ENCODE measurements at regions of chr20 and their contacts with region 1.

Region 1: DNA sequence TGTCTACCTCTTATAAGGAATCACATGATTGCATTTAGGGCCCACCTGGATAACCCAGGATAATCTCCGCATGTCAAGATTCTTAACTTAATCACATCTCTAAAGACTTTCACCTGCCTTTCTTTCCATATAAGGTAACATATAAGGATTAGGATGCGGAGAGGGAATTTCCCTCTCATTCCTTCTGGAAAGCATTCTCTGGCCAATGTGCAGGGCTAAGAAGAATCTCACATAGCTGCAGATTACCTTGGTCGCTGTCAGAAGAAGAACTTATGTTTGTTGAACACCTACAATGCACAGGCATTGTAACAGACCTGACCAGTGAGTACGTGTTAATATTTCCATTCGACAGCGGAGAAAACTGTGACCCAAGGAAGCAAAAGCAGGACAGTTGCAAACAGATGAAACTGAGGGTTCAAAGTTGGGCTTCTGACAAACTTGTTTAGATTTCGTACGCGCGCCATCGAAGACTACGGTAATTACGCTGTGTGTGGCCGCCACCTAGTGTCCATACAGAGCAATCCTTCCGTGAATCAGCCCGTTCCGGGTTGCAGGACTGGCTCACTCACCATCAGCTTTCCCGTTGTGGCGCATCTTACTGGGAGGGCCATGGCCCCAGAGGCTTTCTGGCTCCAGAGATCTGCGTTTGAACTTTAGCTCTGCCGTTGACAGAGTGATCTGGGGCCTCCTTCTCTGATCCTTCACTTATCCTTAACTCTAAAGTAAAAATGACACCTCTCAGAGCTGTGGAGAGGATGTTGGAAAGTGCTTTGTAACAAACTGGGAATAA is 9.5 kb downstream of the C20orf202 start:
- DNase-seq: peak; percentile 52 to 63 (median 60)
- H3K4me3 ChIP-seq: no peak overlapping the region
- H3K4me3 Mint-ChIP-seq: peak overlapping the region in 7 of 8 donors; percentile 4 to 52 (median 26)
- H3K27ac ChIP-seq: no peak overlapping the region
- H3K27ac Mint-ChIP-seq: peak overlapping the region in 1 of 7 donors; percentile 13
- H3K4me1 ChIP-seq: peaks cover 33% of the 10 kb centered on the region
- H3K4me1 Mint-ChIP-seq: peaks cover 19 to 28% (median 25%) of the 10 kb centered on the region in 4 donors
- H3K27me3 ChIP-seq: no peaks in the 10 kb centered on the region
- H3K27me3 Mint-ChIP-seq: peaks cover 3 to 6% of the 10 kb centered on the region in 2 donors

Region 2: DNA sequence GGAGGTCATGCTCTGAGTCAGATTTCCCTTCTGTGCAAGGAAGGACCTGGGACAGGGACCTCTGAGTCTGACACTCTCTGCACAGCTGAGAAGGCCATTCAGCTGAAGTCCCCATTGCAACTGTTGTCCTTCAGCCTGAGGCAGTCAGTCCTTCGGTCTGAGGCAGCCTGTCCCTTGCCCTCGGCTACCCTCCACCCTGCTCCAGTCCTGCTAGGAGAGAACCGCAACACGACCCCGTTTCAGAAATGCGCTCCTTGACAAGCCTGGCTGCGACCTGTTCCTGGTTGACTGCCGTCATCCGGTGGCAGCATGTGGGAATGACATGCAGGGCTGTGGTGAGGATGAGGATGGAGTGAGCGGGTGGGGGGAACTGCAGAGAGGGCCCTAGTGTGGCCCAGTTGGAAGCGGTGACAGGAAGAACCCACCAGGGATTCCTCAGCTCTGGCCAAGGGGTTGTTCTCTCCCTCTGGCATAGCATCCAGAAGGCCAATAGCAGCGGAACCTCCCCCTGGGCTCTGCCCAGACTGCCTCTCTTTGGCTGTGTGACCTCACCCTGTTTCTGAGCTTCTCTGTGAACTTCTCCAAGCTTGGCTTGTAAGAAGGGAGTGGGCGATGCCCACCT is 256.4 kb before region 1 on chr20:
- CTCF ChIA-PET with region 1: interaction called, 4 read pairs
- POLR2A ChIA-PET with region 1: no interaction called
- intact Hi-C with region 1: loop called (anchors 5 kb)
- DNase-seq: peak; percentile 62 to 74 (median 64)
- H3K4me3 ChIP-seq: no peak overlapping the region
- H3K4me3 Mint-ChIP-seq: no peak overlapping the region
- H3K27ac ChIP-seq: no peak overlapping the region
- H3K27ac Mint-ChIP-seq: no peak overlapping the region
- H3K4me1 ChIP-seq: no peaks in the 10 kb centered on the region
- H3K4me1 Mint-ChIP-seq: peaks cover 0 to 3% (median 1%) of the 10 kb centered on the region in 4 donors
- H3K27me3 ChIP-seq: peaks cover 3% of the 10 kb centered on the region
- H3K27me3 Mint-ChIP-seq: peaks cover 18 to 39% of the 10 kb centered on the region in 2 donors

Region 3: DNA sequence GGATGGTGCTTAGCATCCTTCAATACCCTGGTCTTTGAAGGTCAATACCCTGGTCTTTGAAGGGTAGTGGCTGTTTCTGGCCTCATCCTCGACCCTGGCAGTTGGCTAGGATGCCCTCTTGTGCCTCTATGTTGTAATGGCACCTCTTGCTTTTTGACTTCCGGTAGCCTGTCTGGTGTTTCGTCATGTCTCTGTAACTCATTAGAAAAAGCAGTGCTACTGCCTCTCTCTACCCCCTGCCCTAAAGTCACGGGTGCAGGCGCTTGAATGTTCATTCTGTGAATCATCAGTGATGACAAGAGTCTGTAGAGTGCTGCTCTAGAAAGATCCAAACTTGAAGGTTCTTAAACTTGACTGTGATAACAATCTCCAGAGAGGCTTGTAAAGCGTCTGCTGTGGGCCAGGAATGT is 239.0 kb before region 1 on chr20:
- CTCF ChIA-PET with region 1: no interaction called
- POLR2A ChIA-PET with region 1: no interaction called
- intact Hi-C with region 1: loop called (anchors 1 kb)
- DNase-seq: peak in 3 of 5 donors; percentile 10 to 27 (median 22)
- H3K4me3 ChIP-seq: no peak overlapping the region
- H3K4me3 Mint-ChIP-seq: peak overlapping the region in 2 of 8 donors; percentile 33 to 40
- H3K27ac ChIP-seq: no peak overlapping the region
- H3K27ac Mint-ChIP-seq: peak overlapping the region in 3 of 7 donors; percentile 64 to 81 (median 75)
- H3K4me1 ChIP-seq: no peaks in the 10 kb centered on the region
- H3K4me1 Mint-ChIP-seq: peaks cover 0 to 4% (median 2%) of the 10 kb centered on the region in 4 donors
- H3K27me3 ChIP-seq: no peaks in the 10 kb centered on the region
- H3K27me3 Mint-ChIP-seq: peaks cover 0 to 3% of the 10 kb centered on the region in 2 donors

Region 4: DNA sequence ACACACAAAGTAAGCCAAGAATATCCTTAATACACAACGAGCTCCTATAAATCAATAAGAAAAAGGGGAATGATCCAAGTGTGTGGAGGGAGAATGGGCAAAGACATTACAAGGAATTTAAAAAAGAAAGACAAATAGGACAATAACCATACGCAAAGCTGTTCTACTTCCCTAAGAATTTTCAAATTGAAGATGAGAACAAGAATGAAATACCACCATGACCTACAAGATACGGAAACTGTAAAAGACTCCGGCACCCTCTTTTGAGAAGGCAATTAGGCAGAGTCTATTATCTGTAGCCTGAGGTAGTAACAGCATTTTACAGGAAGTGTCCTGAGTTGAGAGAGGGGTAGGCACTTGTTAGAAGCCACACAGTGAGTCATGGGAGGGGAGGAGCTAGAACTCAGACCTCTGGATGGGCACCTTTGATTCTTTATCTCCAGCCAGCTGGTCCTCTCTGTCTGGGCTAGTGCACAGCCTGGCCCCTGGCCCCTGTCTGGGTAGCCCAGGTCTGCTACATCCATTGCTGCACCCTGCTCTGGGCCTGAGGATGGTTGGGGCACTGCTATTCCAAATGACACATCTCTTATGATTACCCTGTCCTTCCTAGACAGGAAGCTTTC is 226.0 kb before region 1 on chr20:
- CTCF ChIA-PET with region 1: no interaction called
- POLR2A ChIA-PET with region 1: no interaction called
- intact Hi-C with region 1: no loop called
- DNase-seq: no peak
- H3K4me3 ChIP-seq: no peak overlapping the region
- H3K4me3 Mint-ChIP-seq: no peak overlapping the region
- H3K27ac ChIP-seq: no peak overlapping the region
- H3K27ac Mint-ChIP-seq: no peak overlapping the region
- H3K4me1 ChIP-seq: no peaks in the 10 kb centered on the region
- H3K4me1 Mint-ChIP-seq: no peaks in the 10 kb centered on the region
- H3K27me3 ChIP-seq: no peaks in the 10 kb centered on the region
- H3K27me3 Mint-ChIP-seq: peaks cover 29 to 37% of the 10 kb centered on the region in 2 donors

Region 5: GRCh38 chr20:1108437-1108920 is 104.3 kb before region 1 on chr20:
- CTCF ChIA-PET with region 1: interaction called, 21 read pairs
- POLR2A ChIA-PET with region 1: interaction called, 3 read pairs
- intact Hi-C with region 1: loop called (anchors 1 kb)
- DNase-seq: peak; percentile 29 to 39 (median 35)
- H3K4me3 ChIP-seq: no peak overlapping the region
- H3K4me3 Mint-ChIP-seq: no peak overlapping the region
- H3K27ac ChIP-seq: no peak overlapping the region
- H3K27ac Mint-ChIP-seq: no peak overlapping the region
- H3K4me1 ChIP-seq: no peaks in the 10 kb centered on the region
- H3K4me1 Mint-ChIP-seq: peaks cover 0 to 11% (median 4%) of the 10 kb centered on the region in 4 donors
- H3K27me3 ChIP-seq: no peaks in the 10 kb centered on the region
- H3K27me3 Mint-ChIP-seq: peaks cover 0 to 1% of the 10 kb centered on the region in 2 donors

Region 6: DNA sequence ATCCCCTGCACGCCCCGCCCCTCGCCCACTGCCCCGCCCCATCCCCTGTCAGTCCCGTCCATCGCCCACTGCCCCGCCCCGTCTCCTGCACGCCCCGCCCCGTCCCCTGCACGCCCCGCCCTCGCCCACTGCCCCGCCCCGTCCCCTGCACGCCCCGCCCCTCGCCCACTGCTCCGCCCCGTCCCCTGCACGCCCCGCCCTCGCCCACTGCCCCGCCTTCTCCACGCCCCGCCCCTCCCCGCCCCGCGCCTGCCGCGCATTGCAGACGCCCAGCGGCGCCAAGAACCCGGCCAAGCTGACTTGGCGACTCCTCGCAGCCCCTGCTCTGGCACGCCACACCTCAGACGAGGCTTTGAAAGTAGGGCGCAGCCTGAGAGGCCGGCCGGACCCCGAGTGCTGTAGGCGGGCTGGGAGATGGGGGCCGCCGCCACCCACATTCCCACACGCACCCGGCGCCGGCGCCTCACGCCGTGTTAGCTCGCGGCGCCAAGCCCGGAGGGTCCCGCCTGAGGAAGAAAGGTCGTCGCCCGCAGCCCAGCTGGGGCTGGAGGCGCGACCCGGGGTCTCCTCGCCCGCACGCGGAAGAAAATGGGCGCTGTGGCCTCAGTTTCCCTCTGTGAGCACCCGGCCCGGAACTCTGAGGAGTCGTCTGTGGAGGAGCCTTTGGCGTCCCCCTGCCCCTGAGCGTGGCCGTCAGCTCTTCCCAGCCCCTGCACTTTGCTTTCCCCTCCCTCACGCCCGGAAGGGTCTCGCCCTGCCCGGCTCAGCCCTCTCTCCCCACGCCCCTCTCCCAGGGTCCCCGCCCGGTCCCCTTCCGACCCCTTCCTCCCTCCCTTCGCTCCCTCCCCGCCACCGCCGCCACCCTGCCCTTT is 13.2 kb after region 1 on chr20 and contains the start of gene RAD21L1:
- CTCF ChIA-PET with region 1: interaction called, 4 read pairs
- POLR2A ChIA-PET with region 1: no interaction called
- intact Hi-C with region 1: loop called (anchors 1 kb)
- DNase-seq: peak; percentile 52 to 81 (median 60)
- H3K4me3 ChIP-seq: peak within 1 kb of the TSS; percentile 44 to 59
- H3K4me3 Mint-ChIP-seq: peak within 1 kb of the TSS; percentile 82 to 91 (median 87)
- H3K27ac ChIP-seq: peak within 1 kb of the TSS; percentile 25
- H3K27ac Mint-ChIP-seq: peak within 1 kb of the TSS; percentile 68 to 91 (median 82)
- H3K4me1 ChIP-seq: peaks cover 17% of the 10 kb centered on the region
- H3K4me1 Mint-ChIP-seq: peaks cover 2 to 18% (median 10%) of the 10 kb centered on the region in 4 donors
- H3K27me3 ChIP-seq: peaks cover 10% of the 10 kb centered on the region
- H3K27me3 Mint-ChIP-seq: peaks cover 4 to 10% of the 10 kb centered on the region in 2 donors
- total RNA-seq, gene RAD21L1: 0.78 TPM in 1 of 2 experiments, not detected in the other

Region 7: DNA sequence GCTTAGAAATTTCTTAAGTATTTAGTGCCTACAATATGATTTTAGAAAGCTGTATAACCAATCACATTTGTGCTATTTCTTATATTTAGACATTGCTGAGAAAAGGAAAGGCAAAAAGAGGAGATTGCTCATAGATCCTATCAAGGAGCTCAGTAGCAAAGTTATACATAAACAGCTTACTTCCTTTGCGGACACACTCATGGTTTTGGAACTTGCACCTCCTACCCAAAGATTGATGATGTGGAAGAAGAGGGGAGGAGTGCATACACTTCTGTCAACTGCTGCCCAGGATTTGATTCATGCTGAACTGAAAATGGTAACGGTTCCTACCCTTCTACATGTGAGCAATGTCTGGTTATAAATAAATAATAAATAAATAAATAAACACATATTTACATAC is 29.7 kb after region 1 on chr20:
- CTCF ChIA-PET with region 1: no interaction called
- POLR2A ChIA-PET with region 1: no interaction called
- intact Hi-C with region 1: no loop called
- DNase-seq: no peak
- H3K4me3 ChIP-seq: no peak overlapping the region
- H3K4me3 Mint-ChIP-seq: no peak overlapping the region
- H3K27ac ChIP-seq: no peak overlapping the region
- H3K27ac Mint-ChIP-seq: no peak overlapping the region
- H3K4me1 ChIP-seq: no peaks in the 10 kb centered on the region
- H3K4me1 Mint-ChIP-seq: peaks cover 0 to 1% (median 0%) of the 10 kb centered on the region in 4 donors
- H3K27me3 ChIP-seq: no peaks in the 10 kb centered on the region
- H3K27me3 Mint-ChIP-seq: peaks cover 14% of the 10 kb centered on the region in 2 donors

Region 8: DNA sequence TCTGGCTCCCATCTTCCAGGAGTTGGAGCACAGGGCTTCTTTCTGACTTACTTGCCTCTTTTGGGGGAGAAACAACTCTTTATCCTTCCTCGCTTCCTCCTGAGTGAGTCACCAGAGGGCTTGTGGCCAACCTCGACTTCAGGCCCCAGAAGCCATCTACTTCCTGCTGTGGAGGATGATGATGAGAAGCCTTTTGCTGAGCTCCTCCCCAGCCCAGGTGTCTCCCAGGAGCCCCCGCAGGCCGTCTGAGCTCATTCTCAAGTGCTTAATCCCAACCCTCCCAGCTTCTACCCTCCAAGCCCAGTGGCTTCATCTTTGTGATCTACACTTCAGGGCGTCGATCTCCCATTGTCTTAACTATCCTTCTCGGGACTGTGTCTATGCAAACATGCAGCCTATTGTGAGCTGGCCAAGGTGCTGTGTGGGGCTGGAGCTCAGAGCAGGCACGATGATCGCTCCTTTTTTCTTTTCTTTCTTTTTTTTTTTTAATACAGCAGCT is 88.3 kb after region 1 on chr20:
- CTCF ChIA-PET with region 1: interaction called, 5 read pairs
- POLR2A ChIA-PET with region 1: no interaction called
- intact Hi-C with region 1: loop called (anchors 5 kb)
- DNase-seq: peak; percentile 18 to 55 (median 23)
- H3K4me3 ChIP-seq: no peak overlapping the region
- H3K4me3 Mint-ChIP-seq: peak overlapping the region in 7 of 8 donors; percentile 2 to 76 (median 55)
- H3K27ac ChIP-seq: no peak overlapping the region
- H3K27ac Mint-ChIP-seq: peak overlapping the region in 6 of 7 donors; percentile 46 to 82 (median 72)
- H3K4me1 ChIP-seq: peaks cover 13% of the 10 kb centered on the region
- H3K4me1 Mint-ChIP-seq: peaks cover 10 to 27% (median 17%) of the 10 kb centered on the region in 4 donors
- H3K27me3 ChIP-seq: no peaks in the 10 kb centered on the region
- H3K27me3 Mint-ChIP-seq: no peaks in the 10 kb centered on the region

Measured in CD4-positive, alpha-beta memory T cell (primary cell).